ENCODE measurements at regions of chr2 and their contacts with region 1.

Region 1: GRCh38 chr2:217785544-217786045 is 217.2 kb downstream of the TNS1 start:
- DNase-seq: peak; percentile 75 to 84
- H3K4me3 ChIP-seq: no peak overlapping the region
- H3K4me3 Mint-ChIP-seq: no peak overlapping the region
- H3K27ac Mint-ChIP-seq: no peak overlapping the region
- H3K4me1 ChIP-seq: no peaks in the 10 kb centered on the region
- H3K4me1 Mint-ChIP-seq: no peaks in the 10 kb centered on the region
- H3K27me3 ChIP-seq: no peaks in the 10 kb centered on the region
- H3K27me3 Mint-ChIP-seq: peaks cover 8% of the 10 kb centered on the region
- CTCF ChIP-seq: peak; percentile 96 to 97

Region 2: DNA sequence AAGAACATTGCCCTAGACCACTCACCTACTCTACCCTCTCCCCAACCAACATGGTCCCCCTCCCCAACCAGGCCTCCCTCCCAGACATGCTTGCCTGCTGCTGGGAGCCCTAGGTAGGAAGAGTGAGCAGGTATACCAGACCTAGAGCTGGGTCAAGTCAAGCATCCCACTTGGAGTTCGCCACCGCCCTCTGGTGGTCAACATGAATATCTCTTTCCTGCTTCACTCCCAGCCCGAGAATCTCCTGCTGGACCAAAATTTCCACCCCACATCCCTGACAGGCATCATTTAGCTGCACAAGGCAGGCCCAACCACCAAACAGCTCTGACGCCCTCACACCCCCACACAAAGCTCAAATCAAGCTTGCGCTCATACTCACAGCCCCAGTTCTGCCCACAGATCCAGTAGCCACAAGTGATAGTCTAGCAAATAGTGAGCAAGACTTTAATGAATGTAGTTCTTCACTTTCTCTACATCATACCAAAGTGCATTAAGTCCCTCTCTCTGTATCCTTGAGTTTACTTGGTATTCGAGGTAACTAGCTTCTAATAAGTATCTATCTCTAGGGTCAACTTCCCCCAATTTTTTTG is 101.2 kb after region 1 on chr2:
- CTCF ChIA-PET with region 1: interaction called, 50 read pairs
- POLR2A ChIA-PET with region 1: no interaction called
- intact Hi-C with region 1: loop called (anchors 1 kb)
- DNase-seq: peak; percentile 76 to 82
- H3K4me3 ChIP-seq: no peak overlapping the region
- H3K4me3 Mint-ChIP-seq: no peak overlapping the region
- H3K27ac Mint-ChIP-seq: no peak overlapping the region
- H3K4me1 ChIP-seq: no peaks in the 10 kb centered on the region
- H3K4me1 Mint-ChIP-seq: no peaks in the 10 kb centered on the region
- H3K27me3 ChIP-seq: no peaks in the 10 kb centered on the region
- H3K27me3 Mint-ChIP-seq: no peaks in the 10 kb centered on the region
- CTCF ChIP-seq: peak; percentile 83 to 87

Region 3: DNA sequence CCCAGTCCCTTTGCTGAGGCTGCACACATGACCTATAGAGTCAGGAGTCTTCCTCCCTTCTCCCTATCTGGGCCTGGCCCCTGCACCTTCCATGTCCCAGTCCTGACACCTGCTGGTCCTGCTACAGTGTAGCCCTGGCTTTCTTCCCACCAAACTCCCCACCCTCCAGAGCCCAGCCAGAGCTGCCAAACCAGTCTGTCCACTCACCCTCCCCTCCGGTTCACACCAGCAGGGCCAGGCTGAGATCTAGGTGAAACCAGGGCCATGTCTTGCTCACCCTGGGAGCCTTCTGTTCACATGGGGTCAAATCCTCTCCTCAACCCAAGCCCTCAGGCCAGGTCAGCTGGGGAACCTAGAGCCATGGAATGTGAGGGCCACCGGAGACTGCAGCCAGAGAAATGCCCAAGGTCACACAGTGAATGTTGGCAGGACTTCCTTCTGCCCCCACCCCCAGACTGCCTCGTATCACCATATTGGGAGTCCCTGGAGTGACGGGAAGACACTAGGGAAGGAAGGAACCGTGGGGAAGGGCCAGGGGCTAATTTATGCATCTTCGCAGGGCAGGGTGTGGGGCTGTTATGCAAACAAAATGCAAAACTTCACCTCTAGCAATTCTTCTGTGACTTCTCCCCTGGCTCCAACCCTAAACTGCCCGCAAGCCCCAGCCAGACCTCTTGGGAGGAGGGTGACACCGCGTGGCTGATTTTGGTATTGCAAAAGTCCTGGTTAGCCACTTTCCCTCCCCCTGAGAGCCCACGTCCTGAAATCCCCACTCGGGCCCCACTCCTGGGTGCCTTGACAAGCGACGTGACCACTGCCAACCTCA is 202.6 kb after region 1 on chr2:
- CTCF ChIA-PET with region 1: interaction called, 39 read pairs
- POLR2A ChIA-PET with region 1: no interaction called
- intact Hi-C with region 1: loop called (anchors 1 kb)
- DNase-seq: peak; percentile 93 to 96
- H3K4me3 ChIP-seq: no peak overlapping the region
- H3K4me3 Mint-ChIP-seq: peak overlapping the region; percentile 43
- H3K27ac Mint-ChIP-seq: peak overlapping the region; percentile 36
- H3K4me1 ChIP-seq: peaks cover 15% of the 10 kb centered on the region
- H3K4me1 Mint-ChIP-seq: peaks cover 14% of the 10 kb centered on the region
- H3K27me3 ChIP-seq: no peaks in the 10 kb centered on the region
- H3K27me3 Mint-ChIP-seq: no peaks in the 10 kb centered on the region
- CTCF ChIP-seq: peak; percentile 84

Region 4: GRCh38 chr2:218033590-218034496 is 248.2 kb after region 1 on chr2:
- CTCF ChIA-PET with region 1: interaction called, 32 read pairs
- POLR2A ChIA-PET with region 1: no interaction called
- intact Hi-C with region 1: loop called (anchors 1 kb)
- DNase-seq: no peak
- H3K4me3 ChIP-seq: no peak overlapping the region
- H3K4me3 Mint-ChIP-seq: no peak overlapping the region
- H3K27ac Mint-ChIP-seq: no peak overlapping the region
- H3K4me1 ChIP-seq: 0 out of 2 replicates have a peak, but pooled peaks cover 5% of the 10 kb centered on the region
- H3K4me1 Mint-ChIP-seq: no peaks in the 10 kb centered on the region
- H3K27me3 ChIP-seq: no peaks in the 10 kb centered on the region
- H3K27me3 Mint-ChIP-seq: peaks cover 6% of the 10 kb centered on the region
- CTCF ChIP-seq: no peak

Region 5: DNA sequence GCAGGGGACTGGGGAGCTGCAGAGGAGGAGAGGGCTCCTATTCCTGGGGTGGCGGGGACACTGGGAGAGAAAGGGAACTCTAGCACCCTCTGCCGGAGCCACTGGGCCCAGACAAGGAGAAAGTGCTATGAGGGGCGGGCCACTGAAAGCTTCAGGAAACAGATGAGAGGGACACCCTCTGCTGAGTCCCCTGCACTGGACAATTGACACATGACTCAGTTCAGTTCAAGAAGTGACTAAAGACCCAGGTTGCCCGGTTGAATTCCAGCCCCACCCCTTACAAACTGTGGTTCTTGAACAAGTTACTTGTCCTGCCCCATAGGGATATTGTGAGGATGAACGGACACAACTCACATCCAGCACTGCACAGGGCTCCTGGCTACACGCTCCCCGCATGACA is 288.4 kb after region 1 on chr2:
- CTCF ChIA-PET with region 1: interaction called, 28 read pairs
- POLR2A ChIA-PET with region 1: no interaction called
- intact Hi-C with region 1: no loop called
- DNase-seq: peak in 1 of 2 experiments; percentile 46
- H3K4me3 ChIP-seq: no peak overlapping the region
- H3K4me3 Mint-ChIP-seq: no peak overlapping the region
- H3K27ac Mint-ChIP-seq: no peak overlapping the region
- H3K4me1 ChIP-seq: no peaks in the 10 kb centered on the region
- H3K4me1 Mint-ChIP-seq: peaks cover 7% of the 10 kb centered on the region
- H3K27me3 ChIP-seq: no peaks in the 10 kb centered on the region
- H3K27me3 Mint-ChIP-seq: peaks cover 17% of the 10 kb centered on the region
- CTCF ChIP-seq: peak in 1 of 2 experiments; percentile 42

Measured in Caco-2 (cell line).